ENCODE measurements at regions of chr2 and their contacts with region 1.

Region 1: GRCh38 chr2:164992818-164993217 is 37.5 kb upstream of the SLC38A11 start:
- DNase-seq: peak in 1 of 3 donors; percentile 57
- ATAC-seq: peak; percentile 79 to 93 (median 90)
- H3K4me3 ChIP-seq: no peak overlapping the region
- H3K27ac ChIP-seq: no peak overlapping the region
- H3K4me1 ChIP-seq: no peaks in the 10 kb centered on the region
- H3K27me3 ChIP-seq: no peaks in the 10 kb centered on the region
- CTCF ChIP-seq: peak; percentile 45 to 64 (median 55)
- POLR2A ChIP-seq: no peak

Region 2: DNA sequence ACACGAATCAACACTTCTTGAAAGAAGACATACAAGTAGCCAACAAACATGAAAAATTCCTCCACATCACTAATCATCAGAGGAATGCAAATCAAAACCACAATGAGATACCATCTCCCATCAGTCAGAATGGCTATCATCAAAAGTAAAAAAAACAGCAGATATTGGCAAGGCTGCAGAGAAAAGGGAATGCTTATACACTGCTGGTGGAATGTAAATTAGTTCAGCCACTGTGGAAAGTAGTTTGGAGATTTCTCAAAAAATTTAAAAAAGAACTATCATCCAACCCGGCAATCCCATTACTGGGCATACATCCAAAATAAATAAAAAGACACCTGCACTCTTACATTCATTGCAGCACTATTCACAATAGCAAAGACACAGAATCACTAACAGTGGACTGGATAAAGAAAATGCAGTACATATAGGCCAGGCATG is 450.2 kb before region 1 on chr2:
- intact Hi-C with region 1: no loop called
- DNase-seq: no peak
- ATAC-seq: peak; percentile 72 to 88 (median 82)
- H3K4me3 ChIP-seq: no peak overlapping the region
- H3K27ac ChIP-seq: no peak overlapping the region
- H3K4me1 ChIP-seq: no peaks in the 10 kb centered on the region
- H3K27me3 ChIP-seq: no peaks in the 10 kb centered on the region
- CTCF ChIP-seq: no peak
- POLR2A ChIP-seq: no peak

Region 3: DNA sequence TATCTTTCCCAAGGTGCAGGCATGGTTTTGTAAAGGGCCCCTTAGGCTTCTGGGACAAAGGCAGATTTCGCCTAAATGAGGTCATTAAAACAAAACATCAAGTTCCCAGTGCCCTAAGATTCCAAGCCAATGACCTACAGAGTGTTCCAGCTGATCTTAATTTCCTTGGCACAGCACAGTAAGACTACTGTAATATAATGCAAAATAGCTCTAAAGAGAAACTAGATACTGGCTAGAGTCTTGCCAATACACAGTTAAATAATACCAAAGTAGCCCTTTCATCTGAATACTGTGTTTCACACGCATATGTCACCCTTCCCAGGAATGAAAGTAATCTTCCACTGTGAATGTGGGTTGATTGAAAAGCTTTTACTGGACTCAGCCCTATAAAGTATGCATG is 386.3 kb before region 1 on chr2:
- intact Hi-C with region 1: no loop called
- DNase-seq: no peak
- ATAC-seq: peak in 3 of 4 donors; percentile 30 to 37 (median 36)
- H3K4me3 ChIP-seq: no peak overlapping the region
- H3K27ac ChIP-seq: no peak overlapping the region
- H3K4me1 ChIP-seq: peaks cover 0 to 10% (median 1%) of the 10 kb centered on the region in 4 donors
- H3K27me3 ChIP-seq: no peaks in the 10 kb centered on the region
- CTCF ChIP-seq: no peak
- POLR2A ChIP-seq: no peak

Region 4: GRCh38 chr2:164757924-164758695 is 234.7 kb before region 1 on chr2:
- intact Hi-C with region 1: no loop called
- DNase-seq: no peak
- ATAC-seq: peak in 3 of 4 donors; percentile 52 to 74 (median 60)
- H3K4me3 ChIP-seq: no peak overlapping the region
- H3K27ac ChIP-seq: peak overlapping the region in 1 of 3 donors; percentile 5
- H3K4me1 ChIP-seq: peaks cover 0 to 15% (median 3%) of the 10 kb centered on the region in 4 donors
- H3K27me3 ChIP-seq: no peaks in the 10 kb centered on the region
- CTCF ChIP-seq: no peak
- POLR2A ChIP-seq: no peak

Region 5: DNA sequence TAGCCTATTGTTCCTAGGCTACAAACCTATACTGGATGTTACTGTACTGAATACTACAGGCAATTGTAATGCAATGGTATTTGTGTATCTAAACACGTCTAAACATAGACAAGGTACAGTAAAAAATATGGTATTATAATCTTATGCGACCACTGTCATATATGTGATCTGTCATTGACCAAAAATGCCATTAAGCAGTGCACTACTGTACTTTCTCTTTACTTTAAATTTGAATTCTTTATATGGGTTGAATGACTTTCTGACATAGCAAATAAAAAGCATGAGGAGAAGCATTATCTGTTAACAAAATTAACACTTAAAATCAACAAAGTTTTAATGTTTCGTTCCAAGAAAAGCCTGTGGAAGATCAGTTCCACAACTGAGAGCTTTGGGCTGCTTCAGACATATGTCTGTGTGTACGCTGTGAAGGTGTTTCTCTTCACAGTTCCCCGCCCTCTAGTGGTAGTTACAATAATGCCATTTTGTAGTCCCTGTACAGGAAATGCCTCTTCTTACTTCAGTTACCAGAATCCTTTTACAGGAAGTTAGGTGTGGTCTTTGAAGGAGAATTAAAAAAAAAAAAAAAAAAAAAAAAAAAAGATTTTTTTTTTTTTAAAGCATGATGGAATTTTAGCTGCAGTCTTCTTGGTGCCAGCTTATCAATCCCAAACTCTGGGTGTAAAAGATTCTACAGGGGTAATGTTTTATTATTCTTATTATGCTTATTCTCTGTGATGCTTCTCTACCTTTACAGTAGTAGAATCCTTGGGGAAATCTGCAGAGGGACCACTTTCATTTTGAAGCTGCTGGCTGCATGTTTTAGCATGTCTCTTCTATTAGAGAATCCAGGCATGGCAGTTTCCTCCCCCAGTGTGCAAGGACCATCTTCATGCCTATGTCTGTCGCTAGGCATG is 300.9 kb after region 1 on chr2:
- intact Hi-C with region 1: loop called in 1 of 2 experiments (anchors 10 kb)
- DNase-seq: peak in 1 of 3 donors; percentile 49
- ATAC-seq: peak; percentile 100
- H3K4me3 ChIP-seq: no peak overlapping the region
- H3K27ac ChIP-seq: no peak overlapping the region
- H3K4me1 ChIP-seq: no peaks in the 10 kb centered on the region
- H3K27me3 ChIP-seq: no peaks in the 10 kb centered on the region
- CTCF ChIP-seq: peak; percentile 65 to 80 (median 72)
- POLR2A ChIP-seq: no peak

Measured in right lobe of liver (tissue), 6 donors.